Activated CD8-positive, alpha-beta T cell treated with anti-CD3 and anti-CD28 coated beads for 36 hours (primary cell): ENCODE measurements at regions of chr15 and their contacts with region 1.

Region 1: GRCh38 chr15:29090617-29091466 is 178.8 kb downstream of the NSMCE3 start:
- DNase-seq: peak; percentile 68
- ATAC-seq: peak; percentile 73
- H3K4me3 Mint-ChIP-seq: peak overlapping the region; percentile 34
- H3K27ac Mint-ChIP-seq: peak overlapping the region; percentile 71
- H3K4me1 Mint-ChIP-seq: peaks cover 25% of the 10 kb centered on the region
- H3K27me3 Mint-ChIP-seq: no peaks in the 10 kb centered on the region
- CTCF ChIP-seq: peak; percentile 89

Region 2: GRCh38 chr15:28975766-28976179 is 115.1 kb before region 1 on chr15:
- CTCF ChIA-PET with region 1: interaction called, 12 read pairs
- POLR2A ChIA-PET with region 1: interaction called, 3 read pairs
- intact Hi-C with region 1: loop called (anchors 10 kb)
- DNase-seq: peak; percentile 73
- ATAC-seq: peak; percentile 82
- H3K4me3 Mint-ChIP-seq: no peak overlapping the region
- H3K27ac Mint-ChIP-seq: no peak overlapping the region
- H3K4me1 Mint-ChIP-seq: peaks cover 33% of the 10 kb centered on the region
- H3K27me3 Mint-ChIP-seq: no peaks in the 10 kb centered on the region
- CTCF ChIP-seq: peak; percentile 90

Region 3: DNA sequence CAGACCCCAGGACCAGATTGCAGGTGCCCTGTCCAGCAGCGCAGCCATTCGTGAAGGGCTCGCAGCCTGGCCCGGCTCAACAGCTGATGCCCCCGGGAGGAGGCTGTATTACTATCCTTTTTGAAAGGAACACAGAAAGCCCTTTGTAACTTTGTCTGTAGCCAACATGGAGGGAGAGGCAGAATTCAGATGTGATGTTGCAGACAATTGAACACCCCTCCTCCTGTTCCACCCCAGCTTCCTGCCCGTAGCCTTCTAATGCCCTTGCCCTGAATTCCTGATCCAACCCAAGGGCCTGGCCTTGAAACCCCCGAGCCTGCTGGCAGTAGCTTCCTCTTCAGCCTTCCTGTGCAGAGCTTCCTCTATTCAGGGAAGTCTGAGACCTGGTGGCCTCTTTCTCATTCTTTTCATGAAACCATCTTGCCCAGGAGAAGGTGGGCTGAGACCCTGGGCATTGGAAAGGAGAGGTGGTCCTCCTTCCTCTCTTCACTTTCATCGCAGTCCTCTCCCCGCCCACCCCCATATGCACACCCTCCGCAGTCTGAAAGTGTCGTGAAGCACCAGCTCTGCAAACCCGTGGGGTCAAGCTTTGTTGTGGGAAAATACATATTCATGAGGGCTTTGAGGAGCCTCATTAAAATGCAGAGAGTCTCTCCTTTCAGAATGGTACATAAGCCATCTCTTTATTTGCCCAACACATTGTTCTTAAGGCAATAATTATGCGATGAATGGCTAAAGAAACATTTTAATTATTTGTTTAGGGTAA is 95.8 kb before region 1 on chr15:
- CTCF ChIA-PET with region 1: interaction called, 31 read pairs
- POLR2A ChIA-PET with region 1: no interaction called
- intact Hi-C with region 1: no loop called
- DNase-seq: no peak
- ATAC-seq: no peak
- H3K4me3 Mint-ChIP-seq: no peak overlapping the region
- H3K27ac Mint-ChIP-seq: peak overlapping the region; percentile 59
- H3K4me1 Mint-ChIP-seq: peaks cover 21% of the 10 kb centered on the region
- H3K27me3 Mint-ChIP-seq: no peaks in the 10 kb centered on the region
- CTCF ChIP-seq: no peak

Region 4: DNA sequence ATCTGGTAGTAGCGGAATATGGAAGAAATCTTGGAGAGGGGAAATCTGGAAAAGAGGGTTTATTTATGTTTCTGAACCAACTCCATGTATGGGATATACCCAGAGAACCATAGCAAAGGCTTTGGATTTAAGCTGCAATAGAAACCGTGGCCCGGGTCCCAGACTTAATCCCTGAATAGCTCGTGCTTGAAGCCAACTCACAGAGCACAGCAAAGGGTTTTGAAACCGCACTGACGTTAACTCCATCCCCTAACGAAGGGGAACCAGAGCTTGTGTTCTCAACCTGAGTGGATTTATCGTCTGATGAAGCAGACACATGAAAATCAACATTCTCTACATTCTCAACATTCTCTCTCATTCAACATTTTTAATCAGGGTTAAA is 50.5 kb before region 1 on chr15:
- CTCF ChIA-PET with region 1: interaction called, 22 read pairs
- POLR2A ChIA-PET with region 1: interaction called, 3 read pairs
- intact Hi-C with region 1: no loop called
- DNase-seq: no peak
- ATAC-seq: no peak
- H3K4me3 Mint-ChIP-seq: peak overlapping the region; percentile 22
- H3K27ac Mint-ChIP-seq: no peak overlapping the region
- H3K4me1 Mint-ChIP-seq: peaks cover 62% of the 10 kb centered on the region
- H3K27me3 Mint-ChIP-seq: no peaks in the 10 kb centered on the region
- CTCF ChIP-seq: no peak

Region 5: DNA sequence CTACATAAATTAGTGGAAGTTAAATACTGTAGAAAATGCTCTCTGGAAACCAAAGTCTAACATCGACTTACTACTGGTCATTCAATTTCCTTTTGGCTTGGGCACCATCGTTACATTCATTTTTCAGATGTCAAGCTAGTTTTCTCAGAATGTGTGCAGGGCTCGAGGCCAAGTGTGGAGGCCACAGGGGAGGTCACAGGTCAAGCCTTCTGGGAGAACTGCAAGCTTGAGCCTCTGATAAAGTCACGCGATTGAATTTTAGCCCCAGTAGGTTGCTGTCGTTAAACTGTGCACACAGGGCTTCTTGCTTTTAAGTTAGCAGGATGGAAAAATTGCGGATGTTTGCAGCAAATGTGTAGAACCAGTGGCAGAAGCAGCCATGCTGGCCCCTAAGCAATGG is 22.9 kb before region 1 on chr15:
- CTCF ChIA-PET with region 1: interaction called, 10 read pairs
- POLR2A ChIA-PET with region 1: interaction called, 3 read pairs
- intact Hi-C with region 1: no loop called
- DNase-seq: no peak
- ATAC-seq: no peak
- H3K4me3 Mint-ChIP-seq: no peak overlapping the region
- H3K27ac Mint-ChIP-seq: no peak overlapping the region
- H3K4me1 Mint-ChIP-seq: peaks cover 22% of the 10 kb centered on the region
- H3K27me3 Mint-ChIP-seq: no peaks in the 10 kb centered on the region
- CTCF ChIP-seq: no peak